Vagina (tissue), 2 donors: ENCODE measurements at regions of chr7 and their contacts with region 1.

Region 1: DNA sequence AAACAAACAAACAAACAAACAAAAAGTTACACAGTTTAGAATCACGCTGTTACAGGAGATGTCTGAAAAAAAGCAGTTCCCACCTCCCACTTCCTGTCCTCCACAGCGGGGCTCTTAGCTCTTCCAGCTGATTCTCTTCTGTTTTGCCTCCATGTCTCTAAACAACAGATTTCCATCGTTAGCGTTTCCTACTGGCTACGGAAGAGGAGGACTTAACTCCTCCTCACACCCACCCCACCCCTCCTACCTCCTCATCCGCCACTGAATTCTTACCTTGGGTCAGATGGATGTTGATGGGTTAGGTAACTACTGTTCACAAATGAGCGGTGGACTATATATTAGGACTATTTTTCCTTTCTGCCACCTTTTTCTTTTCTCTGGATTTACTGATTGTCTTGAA is 36.8 kb upstream of the NUB1 start:
- DNase-seq: peak in 1 of 2 donors; percentile 65
- H3K4me3 ChIP-seq: peak overlapping the region in 1 of 2 donors; percentile 5
- H3K27ac ChIP-seq: no peak overlapping the region
- H3K4me1 ChIP-seq: peaks cover 9% of the 10 kb centered on the region
- H3K27me3 ChIP-seq: no peaks in the 10 kb centered on the region
- CTCF ChIP-seq: no peak
- POLR2A ChIP-seq: no peak

Region 2: DNA sequence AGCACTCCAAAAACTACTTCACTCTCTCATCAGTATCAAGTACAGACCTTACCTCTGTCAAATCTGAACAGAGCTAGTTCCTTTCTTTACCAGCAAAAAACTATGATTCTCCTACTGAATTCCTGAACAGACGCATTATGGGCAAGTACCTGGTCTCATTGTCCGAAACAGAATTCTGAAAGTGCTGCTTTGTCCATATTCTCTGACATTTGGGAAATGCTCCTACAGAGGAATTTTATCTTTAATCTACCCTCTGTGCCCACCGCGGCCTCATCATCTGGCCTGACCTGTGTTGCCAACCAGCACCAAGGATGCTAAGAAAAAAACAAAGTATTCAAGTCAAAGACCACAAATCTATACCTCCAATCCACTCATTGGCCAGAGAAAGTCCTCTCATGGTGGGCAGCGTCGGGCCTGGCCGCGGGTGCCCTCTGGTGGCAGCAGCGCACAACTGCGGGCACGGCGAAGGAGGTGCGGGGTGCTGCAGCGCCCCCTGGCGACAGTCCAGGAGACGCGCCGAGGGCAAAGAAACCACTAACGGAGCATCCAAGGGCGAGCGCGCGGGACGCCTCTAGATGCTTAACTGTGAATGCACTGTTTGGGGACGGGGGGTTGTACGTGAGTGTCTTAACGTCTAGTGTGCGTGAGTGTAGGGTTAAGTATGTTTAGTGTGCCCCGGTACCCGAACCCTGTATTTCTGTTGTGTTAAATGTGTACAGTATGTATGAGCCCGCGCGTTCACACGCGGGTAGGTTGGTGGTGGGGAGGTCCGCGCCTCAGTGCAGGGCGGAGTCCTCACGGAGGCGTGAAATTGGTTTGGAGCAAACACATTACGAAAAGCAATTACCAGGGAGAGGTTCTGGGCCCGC is 132.3 kb before region 1 on chr7:
- intact Hi-C with region 1: loop called (anchors 5 kb)
- DNase-seq: peak in 1 of 2 donors; percentile 95
- H3K4me3 ChIP-seq: no peak overlapping the region
- H3K27ac ChIP-seq: no peak overlapping the region
- H3K4me1 ChIP-seq: peaks cover 10% of the 10 kb centered on the region
- H3K27me3 ChIP-seq: no peaks in the 10 kb centered on the region
- CTCF ChIP-seq: peak; percentile 99 to 100 (median 100)
- POLR2A ChIP-seq: no peak

Region 3: DNA sequence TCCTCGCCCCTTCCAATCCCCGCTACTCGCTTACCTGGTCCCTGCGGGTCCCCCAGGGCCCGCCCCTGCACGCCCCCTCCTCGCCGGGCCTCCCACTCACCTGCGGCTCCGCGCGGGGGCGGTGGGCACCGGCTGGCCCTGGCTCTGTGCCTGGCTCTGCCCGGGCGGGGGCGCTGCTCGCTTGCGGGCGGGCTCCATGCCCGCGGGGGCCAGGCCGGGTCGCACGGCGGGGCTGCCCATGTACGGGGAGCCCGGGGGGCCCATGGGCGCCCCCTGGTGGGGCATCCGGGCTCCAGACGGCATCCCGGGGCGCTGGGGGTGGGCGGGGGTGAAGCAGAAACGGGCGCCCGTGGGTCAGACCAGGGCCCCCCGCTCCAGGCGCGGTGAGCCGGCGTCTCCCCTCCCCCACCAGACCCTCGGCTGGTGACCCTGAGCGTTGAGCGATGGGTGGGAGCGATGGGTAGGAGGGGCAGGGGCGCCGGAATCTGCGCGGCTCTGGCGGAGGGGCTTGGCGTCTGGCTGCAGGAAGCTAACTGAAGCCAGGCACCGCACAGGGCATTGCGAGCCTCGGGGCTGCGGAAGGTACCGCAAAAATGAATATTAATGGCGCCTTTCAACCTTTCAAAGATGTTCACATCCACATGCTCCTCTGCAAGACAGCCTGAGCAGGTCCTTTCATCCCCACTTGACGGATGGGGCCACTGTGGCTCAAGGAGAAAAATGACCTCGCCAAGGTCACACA is 59.3 kb before region 1 on chr7:
- intact Hi-C with region 1: loop called (anchors 5 kb)
- DNase-seq: no peak
- H3K4me3 ChIP-seq: peak overlapping the region; percentile 36 to 47
- H3K27ac ChIP-seq: peak overlapping the region; percentile 94
- H3K4me1 ChIP-seq: peaks cover 69% of the 10 kb centered on the region
- H3K27me3 ChIP-seq: no peaks in the 10 kb centered on the region
- CTCF ChIP-seq: peak; percentile 13 to 71 (median 23)
- POLR2A ChIP-seq: no peak